ENCODE measurements at regions of chr5 and their contacts with region 1.

Region 1: DNA sequence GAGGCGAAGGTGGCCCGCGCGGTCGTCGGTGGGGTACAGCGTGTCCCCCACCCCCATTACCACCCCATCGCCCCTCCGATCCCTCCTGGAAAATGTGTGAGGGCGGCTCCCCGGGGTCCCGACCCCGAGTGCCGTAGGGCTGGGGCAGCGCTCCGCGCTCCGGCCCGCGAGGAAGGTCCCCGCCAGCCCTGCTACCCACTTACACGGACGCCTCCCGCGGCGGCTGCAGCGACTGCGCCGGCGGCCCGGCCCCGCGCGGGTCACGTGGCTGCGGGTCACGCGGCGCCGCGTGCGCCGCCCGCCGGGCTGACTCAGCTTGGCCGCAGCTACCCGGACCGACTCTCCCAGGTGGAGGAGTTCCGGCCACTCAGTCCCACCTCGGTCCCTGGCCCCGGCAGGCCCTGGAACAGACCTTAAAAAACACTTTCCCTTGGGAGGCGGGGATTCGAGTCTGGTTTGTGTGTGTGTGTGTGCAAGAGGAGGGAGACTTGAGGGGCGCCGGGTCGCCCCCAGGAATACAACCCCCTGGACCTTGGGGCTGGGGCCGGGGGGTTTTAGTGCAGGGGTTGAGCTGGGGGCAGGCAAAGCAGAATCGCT is at the start of gene GNPDA1:
- DNase-seq: peak; percentile 53 to 74 (median 66)
- H3K4me3 ChIP-seq: peak within 1 kb of the TSS; percentile 2 to 65 (median 50)
- H3K27ac ChIP-seq: peak within 1 kb of the TSS in 1 of 2 experiments; percentile 62
- H3K4me1 ChIP-seq: peaks cover 17 to 41% (median 32%) of the 10 kb centered on the region in 4 experiments
- H3K27me3 ChIP-seq: peaks cover 0 to 36% (median 15%) of the 10 kb centered on the region in 5 experiments

Region 2: GRCh38 chr5:142000703-142001484 is 12.0 kb before region 1 on chr5:
- CTCF ChIA-PET with region 1: interaction called, 20 read pairs
- POLR2A ChIA-PET with region 1: no interaction called
- DNase-seq: no peak
- H3K4me3 ChIP-seq: no peak overlapping the region
- H3K27ac ChIP-seq: no peak overlapping the region
- H3K4me1 ChIP-seq: peaks cover 0 to 7% (median 0%) of the 10 kb centered on the region in 4 experiments
- H3K27me3 ChIP-seq: peaks cover 0 to 7% (median 3%) of the 10 kb centered on the region in 5 experiments

Region 3: GRCh38 chr5:142024771-142025304 is 11.9 kb after region 1 on chr5:
- CTCF ChIA-PET with region 1: interaction called, 12 read pairs
- POLR2A ChIA-PET with region 1: no interaction called
- DNase-seq: peak; percentile 65 to 85 (median 80)
- H3K4me3 ChIP-seq: peak overlapping the region; percentile 24 to 82 (median 64)
- H3K27ac ChIP-seq: peak overlapping the region in 1 of 2 experiments; percentile 68
- H3K4me1 ChIP-seq: peaks cover 0 to 9% (median 2%) of the 10 kb centered on the region in 4 experiments
- H3K27me3 ChIP-seq: peaks cover 3 to 66% (median 21%) of the 10 kb centered on the region in 5 experiments

Region 4: GRCh38 chr5:142108432-142109330 is 95.8 kb after region 1 on chr5 and contains the start of gene NDFIP1:
- CTCF ChIA-PET with region 1: interaction called, 17 read pairs
- POLR2A ChIA-PET with region 1: no interaction called
- DNase-seq: peak; percentile 80 to 89 (median 81)
- H3K4me3 ChIP-seq: peak within 1 kb of the TSS; percentile 75 to 96 (median 91)
- H3K27ac ChIP-seq: peak within 1 kb of the TSS; percentile 67 to 88
- H3K4me1 ChIP-seq: peaks cover 4 to 35% (median 22%) of the 10 kb centered on the region in 4 experiments
- H3K27me3 ChIP-seq: no peaks in the 10 kb centered on the region